ENCODE measurements at regions of chrX and their contacts with region 1.

Region 1: DNA sequence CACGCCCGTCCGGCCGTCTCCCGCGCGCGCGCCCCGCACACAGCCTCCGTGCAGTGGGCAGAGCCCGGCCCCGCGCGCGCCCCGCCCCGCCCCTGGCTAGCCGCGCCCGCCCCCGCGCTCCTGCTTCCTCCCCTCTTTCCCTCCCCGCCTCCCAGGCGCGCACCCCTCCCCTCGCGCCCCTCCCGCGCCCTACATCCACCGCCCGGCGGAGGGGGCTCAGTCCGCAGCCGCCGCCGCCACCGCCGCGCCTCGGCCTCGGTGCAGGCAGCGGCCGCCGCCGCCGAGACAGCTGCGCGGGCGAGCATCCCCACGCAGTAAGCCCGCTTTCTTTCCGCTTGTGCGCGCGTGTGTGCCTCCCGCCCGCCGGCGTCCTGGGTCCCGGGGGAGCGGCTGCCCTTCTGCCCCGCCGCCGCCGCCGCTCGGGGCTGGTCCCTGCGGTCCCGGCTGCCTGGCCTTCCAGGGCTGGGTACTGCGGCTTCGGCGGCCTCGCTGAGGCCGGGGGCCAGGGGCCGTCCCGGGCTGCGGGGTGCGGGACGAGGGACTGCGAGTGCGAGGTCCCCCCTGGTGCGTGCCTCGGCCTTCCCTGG is at the start of gene FHL1:
- DNase-seq: peak; percentile 32
- H3K4me3 ChIP-seq: peak within 1 kb of the TSS; percentile 56 to 62 (median 61)
- H3K27ac ChIP-seq: no peak within 1 kb of the TSS
- H3K4me1 ChIP-seq: peaks cover 2% of the 10 kb centered on the region
- H3K27me3 ChIP-seq: peaks cover 0 to 2% of the 10 kb centered on the region in 2 experiments
- CTCF ChIP-seq: no peak
- POLR2A ChIP-seq: no peak
- total RNA-seq, gene FHL1: 59.4 and 73.2 TPM in 2 replicates

Region 2: DNA sequence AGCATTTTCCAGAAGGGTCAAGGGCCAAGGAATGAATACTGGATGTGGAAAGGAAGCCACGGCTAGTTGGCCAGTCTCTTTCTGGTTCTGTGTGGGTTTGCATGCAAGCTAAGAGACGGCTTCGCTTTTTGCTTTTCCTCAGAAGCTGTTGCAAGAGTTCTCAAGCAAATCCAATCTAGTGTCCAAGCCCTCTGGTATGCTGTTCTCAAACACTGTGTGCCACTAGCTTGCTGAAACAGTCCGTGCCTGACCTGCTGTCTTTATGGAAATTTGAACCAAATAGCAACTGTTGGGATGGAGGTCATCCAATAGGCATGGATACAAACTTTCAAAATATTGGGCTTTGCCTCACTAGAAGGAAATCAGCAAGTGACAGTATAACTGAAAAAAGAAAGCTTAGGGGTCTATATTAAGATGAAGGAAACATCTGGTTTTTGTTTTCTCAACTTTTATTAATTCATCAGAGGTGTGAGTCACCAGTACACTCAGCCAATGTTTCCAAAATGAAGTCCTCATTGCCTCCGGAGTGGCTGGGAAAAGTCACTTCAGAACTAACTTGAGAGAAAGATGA is 91.7 kb before region 1 on chrX:
- CTCF ChIA-PET with region 1: no interaction called
- POLR2A ChIA-PET with region 1: no interaction called
- dilution Hi-C with region 1: no loop called
- intact Hi-C with region 1: loop called (anchors 5 kb)
- DNase-seq: peak; percentile 86
- H3K4me3 ChIP-seq: no peak overlapping the region
- H3K27ac ChIP-seq: peak overlapping the region; percentile 73
- H3K4me1 ChIP-seq: peaks cover 14% of the 10 kb centered on the region
- H3K27me3 ChIP-seq: no peaks in the 10 kb centered on the region
- CTCF ChIP-seq: no peak
- POLR2A ChIP-seq: no peak

Region 3: DNA sequence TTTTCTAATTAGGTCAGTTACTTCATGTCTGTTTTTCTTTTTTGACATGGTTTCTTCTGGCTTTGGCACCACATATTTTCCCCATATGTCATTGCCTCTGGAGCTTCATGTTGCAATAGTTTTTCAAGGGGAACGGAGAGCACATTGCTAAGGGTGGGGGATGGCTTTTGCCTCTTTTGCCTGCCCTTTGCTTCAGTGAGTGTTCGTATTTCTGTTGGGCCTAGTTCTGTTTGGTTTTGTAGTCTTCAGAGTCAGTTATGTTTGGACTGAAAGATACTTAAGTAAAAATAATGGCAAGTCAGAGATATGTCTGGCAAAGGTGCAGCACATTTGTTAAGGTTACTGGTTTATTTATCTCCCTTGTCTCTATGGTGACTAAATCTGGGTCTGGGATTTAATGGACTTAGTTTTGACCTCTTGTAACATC is 29.0 kb after region 1 on chrX:
- CTCF ChIA-PET with region 1: no interaction called
- POLR2A ChIA-PET with region 1: no interaction called
- dilution Hi-C with region 1: no loop called
- intact Hi-C with region 1: no loop called
- DNase-seq: no peak
- H3K4me3 ChIP-seq: no peak overlapping the region
- H3K27ac ChIP-seq: no peak overlapping the region
- H3K4me1 ChIP-seq: no peaks in the 10 kb centered on the region
- H3K27me3 ChIP-seq: no peaks in the 10 kb centered on the region
- CTCF ChIP-seq: no peak
- POLR2A ChIP-seq: no peak

Measured in endothelial cell of umbilical vein (primary cell).